ENCODE measurements at regions of chr2 and their contacts with region 1.

Region 1: DNA sequence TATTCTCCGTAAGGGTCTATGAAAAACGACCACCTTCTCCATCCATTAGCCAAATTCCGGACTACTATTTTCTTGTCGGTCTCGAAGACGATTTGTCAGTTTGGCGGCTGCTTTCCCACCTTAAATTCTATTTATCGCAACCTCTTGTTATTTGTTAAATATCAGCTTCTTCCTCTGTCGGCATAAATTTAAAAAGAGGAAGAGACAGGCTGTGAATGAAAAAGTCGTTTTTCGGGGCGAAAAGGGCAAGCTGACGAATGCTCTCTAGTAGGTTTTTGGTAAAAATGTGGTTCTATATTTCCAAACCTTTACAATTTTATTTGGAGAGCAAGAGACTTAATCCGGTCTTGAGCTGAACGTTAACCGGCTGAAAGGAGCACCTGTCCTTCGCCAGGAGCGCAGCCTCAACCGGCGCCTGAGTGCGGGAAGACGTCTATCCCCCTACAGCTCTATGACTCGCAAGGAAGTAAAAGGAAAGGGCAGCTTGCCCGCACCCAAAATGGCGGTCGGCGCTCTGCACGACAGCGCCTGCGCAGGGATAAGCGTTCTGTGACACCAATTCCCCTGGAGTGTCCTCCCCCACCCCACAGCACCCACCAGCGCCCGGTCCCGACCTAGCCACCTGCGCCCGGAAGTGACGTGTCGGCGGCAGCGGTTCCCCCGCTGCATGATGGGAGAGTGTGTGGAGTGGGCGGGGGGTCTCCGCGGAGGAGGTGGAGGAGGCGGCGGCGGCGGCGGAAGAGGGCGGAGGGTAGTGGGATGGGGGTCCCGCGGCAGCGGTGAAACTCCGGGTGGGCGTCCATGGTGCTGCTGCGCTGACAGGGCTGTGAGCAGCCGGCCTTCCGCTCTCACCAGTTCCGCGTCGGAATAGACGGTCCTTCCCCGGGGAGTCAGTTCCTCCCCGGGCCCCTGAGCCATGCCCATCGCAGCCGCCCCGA is at the start of gene AFTPH:
- DNase-seq: peak; percentile 99
- ATAC-seq: peak; percentile 93
- H3K4me3 Mint-ChIP-seq: peak within 1 kb of the TSS; percentile 99
- H3K27ac Mint-ChIP-seq: peak within 1 kb of the TSS; percentile 100
- H3K4me1 Mint-ChIP-seq: peaks cover 33% of the 10 kb centered on the region
- H3K27me3 Mint-ChIP-seq: no peaks in the 10 kb centered on the region
- CTCF ChIP-seq: no peak
- total RNA-seq, gene AFTPH: 30.6 to 31.1 TPM

Region 2: DNA sequence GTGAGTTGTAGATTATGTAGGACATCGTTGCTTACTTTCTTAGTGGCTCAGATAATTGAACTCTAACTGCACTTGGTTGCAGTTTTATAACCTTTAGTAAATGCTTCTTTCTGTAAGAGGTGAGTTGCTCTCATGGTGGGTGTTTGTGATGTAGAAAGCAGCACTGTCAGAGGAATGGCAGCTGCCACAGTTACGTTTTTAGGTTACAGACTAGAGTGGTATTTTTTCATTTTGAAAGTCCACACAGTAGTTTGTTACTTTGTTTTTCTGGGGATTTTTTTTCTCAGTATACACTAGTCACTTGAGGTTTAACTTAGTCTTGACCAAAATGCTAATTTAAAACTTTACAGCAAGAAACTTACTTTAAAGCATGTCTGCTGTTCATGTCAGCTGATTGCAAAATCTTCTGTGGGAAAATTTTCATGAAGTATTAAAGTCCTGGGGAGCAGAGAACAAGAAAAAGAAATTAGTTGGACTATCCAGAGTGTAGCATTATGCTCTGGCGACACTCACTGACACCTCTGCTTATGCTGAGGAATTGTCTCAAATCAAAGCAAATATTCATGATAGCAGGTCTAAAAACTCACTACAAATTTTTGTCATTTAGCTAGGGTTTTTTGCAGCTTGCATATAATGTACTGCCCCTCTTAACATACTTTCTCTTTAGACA is 15.0 kb after region 1 on chr2:
- CTCF ChIA-PET with region 1: interaction called, 16 read pairs
- POLR2A ChIA-PET with region 1: interaction called, 17 read pairs
- intact Hi-C with region 1: no loop called
- DNase-seq: peak; percentile 43
- ATAC-seq: peak; percentile 67
- H3K4me3 Mint-ChIP-seq: no peak overlapping the region
- H3K27ac Mint-ChIP-seq: peak overlapping the region; percentile 47
- H3K4me1 Mint-ChIP-seq: peaks cover 78% of the 10 kb centered on the region
- H3K27me3 Mint-ChIP-seq: no peaks in the 10 kb centered on the region
- CTCF ChIP-seq: no peak

Region 3: GRCh38 chr2:64551851-64552250 is 27.9 kb after region 1 on chr2:
- CTCF ChIA-PET with region 1: interaction called, 35 read pairs
- POLR2A ChIA-PET with region 1: interaction called, 6 read pairs
- intact Hi-C with region 1: no loop called
- DNase-seq: no peak
- ATAC-seq: no peak
- H3K4me3 Mint-ChIP-seq: no peak overlapping the region
- H3K27ac Mint-ChIP-seq: no peak overlapping the region
- H3K4me1 Mint-ChIP-seq: peaks cover 21% of the 10 kb centered on the region
- H3K27me3 Mint-ChIP-seq: no peaks in the 10 kb centered on the region
- CTCF ChIP-seq: no peak

Region 4: DNA sequence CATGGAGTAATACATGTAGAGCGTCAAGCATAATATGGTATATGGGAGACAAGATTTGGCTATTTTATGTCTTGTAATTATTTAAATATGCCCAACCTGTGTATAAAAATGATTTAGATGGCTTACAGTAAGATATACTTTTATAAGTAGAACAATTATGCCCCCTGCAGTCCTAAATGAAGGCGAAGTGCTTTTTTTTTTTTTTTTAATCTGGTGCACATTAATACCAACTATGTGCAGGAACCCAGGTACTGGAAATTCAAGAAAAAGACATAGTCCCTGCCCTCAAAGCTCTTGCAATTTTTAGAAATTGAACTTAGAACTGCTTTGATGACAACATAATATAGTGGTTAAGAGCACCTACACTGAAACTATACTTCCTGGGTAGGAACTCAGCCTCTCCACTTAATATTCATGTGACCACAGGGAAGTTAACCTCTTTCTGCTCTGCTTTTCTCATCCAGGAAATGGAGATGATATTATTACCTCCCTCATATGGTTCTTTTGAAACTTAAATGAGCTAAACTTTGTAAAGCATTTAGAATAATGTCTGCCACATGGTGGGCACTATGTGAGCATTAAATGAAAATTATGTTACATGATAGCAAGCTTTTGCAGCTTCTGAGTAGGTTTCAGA is 38.3 kb after region 1 on chr2:
- CTCF ChIA-PET with region 1: interaction called, 108 read pairs
- POLR2A ChIA-PET with region 1: interaction called, 12 read pairs
- intact Hi-C with region 1: loop called (anchors 2 kb)
- DNase-seq: no peak
- ATAC-seq: peak; percentile 66
- H3K4me3 Mint-ChIP-seq: no peak overlapping the region
- H3K27ac Mint-ChIP-seq: peak overlapping the region; percentile 30
- H3K4me1 Mint-ChIP-seq: peaks cover 41% of the 10 kb centered on the region
- H3K27me3 Mint-ChIP-seq: no peaks in the 10 kb centered on the region
- CTCF ChIP-seq: peak; percentile 70

Region 5: DNA sequence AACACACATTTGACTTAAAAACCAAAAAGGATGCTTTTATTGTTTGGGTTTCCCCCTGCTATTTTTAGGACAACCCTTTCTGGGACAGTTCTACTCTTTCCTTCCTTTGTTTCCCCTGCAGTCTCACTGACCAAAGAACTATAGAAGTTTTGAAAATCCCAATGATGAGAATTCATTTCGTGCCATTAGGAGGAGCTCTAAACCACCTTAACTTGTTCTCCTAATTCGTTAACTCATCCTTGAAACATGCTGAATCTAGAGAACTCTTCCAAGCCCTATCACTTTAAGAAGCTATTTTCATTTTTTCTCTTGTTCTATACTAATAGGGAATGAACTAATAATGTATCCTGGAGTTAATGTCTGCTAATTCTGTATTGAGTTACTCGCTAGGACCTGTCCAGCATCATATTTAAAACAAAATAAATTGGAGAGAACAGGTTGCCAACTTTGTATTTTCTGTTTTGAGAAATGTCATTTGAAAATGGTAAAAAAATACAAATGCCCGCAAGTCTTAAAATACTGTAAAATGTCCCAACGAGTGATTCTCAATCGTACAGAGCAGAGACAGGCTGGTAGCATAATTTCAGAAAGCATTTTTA is 63.0 kb after region 1 on chr2:
- CTCF ChIA-PET with region 1: interaction called, 10 read pairs
- POLR2A ChIA-PET with region 1: no interaction called
- intact Hi-C with region 1: no loop called
- DNase-seq: no peak
- ATAC-seq: peak; percentile 65
- H3K4me3 Mint-ChIP-seq: no peak overlapping the region
- H3K27ac Mint-ChIP-seq: no peak overlapping the region
- H3K4me1 Mint-ChIP-seq: peaks cover 15% of the 10 kb centered on the region
- H3K27me3 Mint-ChIP-seq: no peaks in the 10 kb centered on the region
- CTCF ChIP-seq: peak; percentile 69

Region 6: DNA sequence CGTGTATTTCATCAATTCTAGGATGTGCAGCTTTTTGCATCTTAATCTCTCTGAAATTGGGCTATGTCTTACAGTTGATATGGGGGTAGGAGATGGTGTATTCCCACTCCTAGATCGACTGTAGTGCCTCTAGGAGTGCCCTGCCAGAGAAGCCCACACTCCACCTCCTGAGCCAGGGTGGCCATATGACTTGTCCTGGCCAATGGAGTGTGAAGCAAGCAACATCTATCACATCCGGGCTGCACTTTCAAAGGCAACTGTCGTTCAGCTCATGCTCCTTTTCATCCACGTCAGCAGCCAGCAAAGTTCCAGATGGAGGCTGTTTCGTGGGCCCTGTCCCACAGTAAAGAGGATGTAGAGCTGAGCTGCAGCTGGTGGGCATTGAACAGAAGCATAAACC is 315.9 kb after region 1 on chr2:
- CTCF ChIA-PET with region 1: no interaction called
- POLR2A ChIA-PET with region 1: no interaction called
- intact Hi-C with region 1: no loop called
- DNase-seq: peak; percentile 44
- ATAC-seq: peak; percentile 82
- H3K4me3 Mint-ChIP-seq: no peak overlapping the region
- H3K27ac Mint-ChIP-seq: no peak overlapping the region
- H3K4me1 Mint-ChIP-seq: peaks cover 6% of the 10 kb centered on the region
- H3K27me3 Mint-ChIP-seq: no peaks in the 10 kb centered on the region
- CTCF ChIP-seq: no peak

Region 7: GRCh38 chr2:64865073-64865830 is 341.3 kb after region 1 on chr2:
- CTCF ChIA-PET with region 1: interaction called, 17 read pairs
- POLR2A ChIA-PET with region 1: interaction called, 6 read pairs
- intact Hi-C with region 1: loop called (anchors 2 kb)
- DNase-seq: peak; percentile 72
- ATAC-seq: peak; percentile 68
- H3K4me3 Mint-ChIP-seq: peak overlapping the region; percentile 68
- H3K27ac Mint-ChIP-seq: peak overlapping the region; percentile 35
- H3K4me1 Mint-ChIP-seq: peaks cover 3% of the 10 kb centered on the region
- H3K27me3 Mint-ChIP-seq: peaks cover 6% of the 10 kb centered on the region
- CTCF ChIP-seq: peak; percentile 94

Region 8: GRCh38 chr2:64873472-64873924 is 349.6 kb after region 1 on chr2:
- CTCF ChIA-PET with region 1: interaction called, 17 read pairs
- POLR2A ChIA-PET with region 1: interaction called, 6 read pairs
- intact Hi-C with region 1: loop called (anchors 2 kb)
- DNase-seq: peak; percentile 87
- ATAC-seq: peak; percentile 92
- H3K4me3 Mint-ChIP-seq: peak overlapping the region; percentile 36
- H3K27ac Mint-ChIP-seq: no peak overlapping the region
- H3K4me1 Mint-ChIP-seq: peaks cover 6% of the 10 kb centered on the region
- H3K27me3 Mint-ChIP-seq: peaks cover 1% of the 10 kb centered on the region
- CTCF ChIP-seq: peak; percentile 89

Measured in activated CD8-positive, alpha-beta T cell treated with anti-CD3 and anti-CD28 coated beads for 36 hours (primary cell).